ENCODE measurements at regions of chr9 and their contacts with region 1.

Region 1: GRCh38 chr9:100150214-100150613 is 51.2 kb downstream of the INVS start:
- DNase-seq: no peak
- ATAC-seq: no peak
- H3K4me3 ChIP-seq: no peak overlapping the region
- H3K27ac ChIP-seq: no peak overlapping the region
- H3K4me1 ChIP-seq: peaks cover 0 to 3% (median 0%) of the 10 kb centered on the region in 9 donors
- H3K27me3 ChIP-seq: no peaks in the 10 kb centered on the region
- CTCF ChIP-seq: no peak

Region 2: GRCh38 chr9:100084734-100085133 is 65.5 kb before region 1 on chr9:
- intact Hi-C with region 1: no loop called
- DNase-seq: no peak
- ATAC-seq: no peak
- H3K4me3 ChIP-seq: no peak overlapping the region
- H3K27ac ChIP-seq: no peak overlapping the region
- H3K4me1 ChIP-seq: peaks cover 0 to 78% (median 44%) of the 10 kb centered on the region in 9 donors
- H3K27me3 ChIP-seq: no peaks in the 10 kb centered on the region
- CTCF ChIP-seq: no peak

Region 3: GRCh38 chr9:100196215-100196614 is 46.0 kb after region 1 on chr9:
- intact Hi-C with region 1: loop called in 1 of 10 experiments (anchors 10 kb)
- DNase-seq: no peak
- ATAC-seq: no peak
- H3K4me3 ChIP-seq: no peak overlapping the region
- H3K27ac ChIP-seq: no peak overlapping the region
- H3K4me1 ChIP-seq: no peaks in the 10 kb centered on the region
- H3K27me3 ChIP-seq: no peaks in the 10 kb centered on the region
- CTCF ChIP-seq: no peak

Region 4: GRCh38 chr9:100619665-100620064 is 469.5 kb after region 1 on chr9:
- intact Hi-C with region 1: loop called in 1 of 10 experiments (anchors 5 kb)
- DNase-seq: no peak
- ATAC-seq: no peak
- H3K4me3 ChIP-seq: no peak overlapping the region
- H3K27ac ChIP-seq: no peak overlapping the region
- H3K4me1 ChIP-seq: no peaks in the 10 kb centered on the region
- H3K27me3 ChIP-seq: no peaks in the 10 kb centered on the region
- CTCF ChIP-seq: no peak